Activated T-helper 1 cell treated with anti-CD3 and anti-CD28 coated beads, Interleukin-12 subunit alpha, Interleukin-12 subunit beta, Interleukin-2, Interleukin-4 antibody, amounts not matched to agents 30 ng/mL and 10 ng/mL and 1 ng/mL, durations not matched to agents 14 hours and 24 hours and 36 hours (primary cell): ENCODE measurements at regions of chr3 and their contacts with region 1.

Region 1: DNA sequence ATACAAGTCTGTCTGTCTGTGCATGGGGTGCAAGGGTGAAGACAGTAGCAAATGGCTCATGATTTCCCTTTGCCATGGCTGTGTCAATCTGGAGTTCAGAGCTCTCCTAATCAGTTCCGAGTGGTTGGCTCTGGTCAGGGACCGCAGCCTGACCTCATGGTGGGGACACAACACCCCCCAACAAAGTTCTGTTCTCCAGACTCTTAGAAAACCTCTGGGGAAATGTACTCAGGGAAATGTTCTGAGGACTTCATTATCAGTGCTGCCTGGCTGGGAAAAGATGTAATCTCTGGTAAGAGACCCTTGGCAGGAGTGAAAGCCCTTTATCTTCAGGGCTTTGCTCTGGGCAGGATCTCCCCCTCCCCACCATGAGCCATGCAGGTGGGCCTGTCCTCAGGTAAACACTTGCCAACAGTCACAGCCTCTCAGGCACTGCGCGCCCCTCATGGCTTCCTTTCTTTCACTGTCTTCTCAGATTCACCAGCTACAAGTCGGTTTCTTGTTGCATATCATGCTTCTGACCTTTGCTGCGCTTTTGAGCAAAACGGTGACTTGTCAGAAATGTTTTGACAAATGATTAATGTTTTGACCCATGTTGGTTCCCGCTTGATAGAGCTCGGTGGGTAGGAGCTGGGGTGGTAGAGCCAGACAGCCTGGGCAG is 95.5 kb downstream of the ST6GAL1 start:
- DNase-seq: no peak
- H3K4me3 Mint-ChIP-seq: peak overlapping the region; percentile 85
- H3K27ac Mint-ChIP-seq: peak overlapping the region; percentile 97
- H3K4me1 Mint-ChIP-seq: peaks cover 59% of the 10 kb centered on the region
- H3K27me3 Mint-ChIP-seq: no peaks in the 10 kb centered on the region

Region 2: GRCh38 chr3:186783073-186783730 is 242.6 kb before region 1 on chr3 and contains the start of gene EIF4A2:
- intact Hi-C with region 1: loop called (anchors 5 kb)
- DNase-seq: peak; percentile 89
- H3K4me3 Mint-ChIP-seq: peak within 1 kb of the TSS; percentile 95
- H3K27ac Mint-ChIP-seq: peak within 1 kb of the TSS; percentile 94
- H3K4me1 Mint-ChIP-seq: peaks cover 41% of the 10 kb centered on the region
- H3K27me3 Mint-ChIP-seq: no peaks in the 10 kb centered on the region
- total RNA-seq, gene EIF4A2: 491 and 514 TPM in 2 replicates

Region 3: DNA sequence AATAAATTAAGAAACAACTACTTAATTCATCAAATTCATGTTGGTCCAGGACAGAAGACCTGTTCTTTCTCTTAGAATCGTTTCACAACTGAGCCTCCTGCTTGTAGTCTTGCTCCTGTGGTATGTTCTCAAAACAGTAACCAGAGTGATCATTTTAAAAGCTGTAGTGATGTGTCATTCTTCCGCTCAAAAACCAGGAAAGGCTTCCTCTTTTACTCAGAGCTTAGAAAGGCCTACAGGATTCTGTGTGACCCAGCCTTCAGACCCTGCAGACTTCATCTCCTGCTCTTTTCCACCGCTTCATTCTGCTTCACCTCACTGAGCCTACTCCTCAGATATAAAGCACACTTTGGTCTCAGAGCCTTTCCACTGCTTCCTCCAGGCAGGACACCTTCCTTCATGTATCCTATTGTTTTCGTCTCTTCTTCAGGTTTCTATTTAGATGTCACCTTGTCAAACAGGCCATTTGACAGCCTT is 72.7 kb before region 1 on chr3:
- intact Hi-C with region 1: loop called (anchors 5 kb)
- DNase-seq: peak; percentile 16
- H3K4me3 Mint-ChIP-seq: peak overlapping the region; percentile 59
- H3K27ac Mint-ChIP-seq: peak overlapping the region; percentile 89
- H3K4me1 Mint-ChIP-seq: peaks cover 83% of the 10 kb centered on the region
- H3K27me3 Mint-ChIP-seq: no peaks in the 10 kb centered on the region

Region 4: DNA sequence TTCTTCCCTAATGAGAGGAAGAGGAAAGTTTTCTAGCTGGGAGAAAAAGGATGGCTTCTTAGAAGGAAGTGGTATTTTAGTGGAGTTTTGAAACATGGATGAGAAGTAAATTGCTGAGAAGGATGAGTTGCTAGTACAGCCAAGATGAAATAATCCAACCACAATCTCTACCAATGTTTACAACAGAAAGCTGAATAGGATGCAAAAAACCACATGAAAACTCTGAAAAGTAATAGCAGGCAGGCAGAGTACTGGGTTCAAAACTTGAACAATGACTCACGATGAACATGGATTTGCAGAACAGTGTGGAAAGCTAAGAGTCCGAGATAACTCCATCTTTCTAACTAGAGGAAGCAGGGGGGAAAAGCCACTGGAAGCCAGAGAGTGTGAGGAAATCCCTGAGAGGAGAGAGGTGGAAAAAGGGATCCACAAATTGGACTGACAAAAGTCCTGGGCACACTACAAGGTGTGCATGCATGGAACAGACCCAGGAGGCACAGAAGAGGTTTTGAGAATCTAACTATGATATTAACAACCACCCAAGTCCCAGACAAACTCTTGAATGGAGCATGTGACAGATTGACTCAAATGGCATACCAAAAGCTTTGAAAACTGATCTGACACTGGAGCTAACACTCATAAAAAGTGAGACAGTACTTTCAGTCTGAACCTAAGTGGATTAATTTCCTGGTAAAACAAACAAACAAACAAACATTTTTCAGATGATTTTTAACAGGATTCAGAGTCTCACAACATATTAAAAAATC is 18.7 kb before region 1 on chr3:
- intact Hi-C with region 1: loop called (anchors 1 kb)
- DNase-seq: peak; percentile 19
- H3K4me3 Mint-ChIP-seq: peak overlapping the region; percentile 4
- H3K27ac Mint-ChIP-seq: peak overlapping the region; percentile 56
- H3K4me1 Mint-ChIP-seq: peaks cover 65% of the 10 kb centered on the region
- H3K27me3 Mint-ChIP-seq: no peaks in the 10 kb centered on the region

Region 5: GRCh38 chr3:187041362-187042307 is 15.8 kb after region 1 on chr3:
- intact Hi-C with region 1: loop called (anchors 1 kb)
- DNase-seq: peak; percentile 57
- H3K4me3 Mint-ChIP-seq: peak overlapping the region; percentile 82
- H3K27ac Mint-ChIP-seq: peak overlapping the region; percentile 95
- H3K4me1 Mint-ChIP-seq: peaks cover 85% of the 10 kb centered on the region
- H3K27me3 Mint-ChIP-seq: no peaks in the 10 kb centered on the region

Region 6: GRCh38 chr3:187139126-187139894 is 113.5 kb after region 1 on chr3 and contains the start of gene RPL39L:
- intact Hi-C with region 1: loop called (anchors 2 kb)
- DNase-seq: peak; percentile 91
- H3K4me3 Mint-ChIP-seq: peak within 1 kb of the TSS; percentile 92
- H3K27ac Mint-ChIP-seq: peak within 1 kb of the TSS; percentile 96
- H3K4me1 Mint-ChIP-seq: peaks cover 34% of the 10 kb centered on the region
- H3K27me3 Mint-ChIP-seq: peaks cover 3% of the 10 kb centered on the region
- total RNA-seq, gene RPL39L: 7.5 and 8.3 TPM in 2 replicates